Activated B cell treated with CpG ODN at 0.5 μM for 24 hours (primary cell): ENCODE measurements at regions of chr10 and their contacts with region 1.

Region 1: GRCh38 chr10:110567201-110568054 is at the start of gene SMC3:
- DNase-seq: peak; percentile 89
- ATAC-seq: peak; percentile 88
- H3K4me3 Mint-ChIP-seq: peak within 1 kb of the TSS; percentile 91
- H3K27ac Mint-ChIP-seq: peak within 1 kb of the TSS; percentile 98
- H3K4me1 Mint-ChIP-seq: peaks cover 41% of the 10 kb centered on the region
- H3K27me3 Mint-ChIP-seq: no peaks in the 10 kb centered on the region
- CTCF ChIP-seq: no peak
- total RNA-seq, gene SMC3: 41.1 and 43.3 TPM in 2 replicates

Region 2: DNA sequence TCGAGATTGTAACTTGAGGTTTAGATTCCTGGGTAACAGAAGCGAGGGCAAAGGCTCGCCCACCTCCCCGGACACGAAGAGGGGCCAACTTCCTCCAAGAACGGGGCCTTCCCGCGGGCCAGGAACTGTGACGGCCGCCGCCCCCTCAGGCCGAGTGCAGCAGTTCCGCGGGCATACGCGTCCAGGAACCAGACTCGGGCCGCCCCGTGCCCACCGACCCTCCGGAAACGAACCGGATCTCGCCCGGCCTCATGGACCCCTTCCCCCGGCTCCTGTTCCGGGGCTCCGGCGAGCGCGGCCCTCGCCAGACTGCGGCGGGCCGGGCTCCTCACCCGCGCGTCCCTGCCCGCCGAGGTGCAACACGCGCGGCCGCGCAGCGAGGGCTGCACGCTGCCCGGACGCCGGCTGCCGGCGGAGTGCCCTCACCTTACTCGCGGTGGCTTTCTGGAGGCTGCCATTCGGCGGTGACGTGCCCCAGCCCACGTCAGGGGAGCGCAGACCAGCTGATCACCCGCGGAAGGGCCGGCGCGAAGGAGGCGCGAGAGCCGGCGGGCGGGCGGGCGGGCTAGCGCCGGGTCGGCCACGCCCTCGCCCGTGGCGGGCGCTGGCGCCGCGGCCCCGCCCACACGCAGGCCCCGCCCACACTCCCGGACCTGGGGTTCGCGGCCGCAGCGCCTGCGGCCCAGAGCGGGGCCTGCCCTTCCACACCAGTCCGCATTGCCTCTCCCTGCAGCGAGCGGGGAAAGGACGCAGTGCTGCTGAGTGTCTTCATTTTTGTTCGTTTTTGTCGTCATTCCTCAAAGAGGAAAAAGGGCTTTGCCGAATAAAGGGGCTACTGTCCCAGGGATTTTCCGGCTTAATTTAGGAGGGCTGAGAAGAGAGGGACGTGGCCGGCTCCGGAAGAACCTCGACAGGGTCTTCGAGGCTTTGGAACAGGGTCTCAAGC is 644.2 kb before region 1 on chr10 and contains the start of gene XPNPEP1:
- CTCF ChIA-PET with region 1: no interaction called
- POLR2A ChIA-PET with region 1: no interaction called
- intact Hi-C with region 1: loop called (anchors 5 kb)
- DNase-seq: peak; percentile 85
- ATAC-seq: peak; percentile 94
- H3K4me3 Mint-ChIP-seq: peak within 1 kb of the TSS; percentile 88
- H3K27ac Mint-ChIP-seq: peak within 1 kb of the TSS; percentile 81
- H3K4me1 Mint-ChIP-seq: peaks cover 36% of the 10 kb centered on the region
- H3K27me3 Mint-ChIP-seq: peaks cover 2% of the 10 kb centered on the region
- CTCF ChIP-seq: no peak
- total RNA-seq, gene XPNPEP1: 53.5 and 70.6 TPM in 2 replicates

Region 3: DNA sequence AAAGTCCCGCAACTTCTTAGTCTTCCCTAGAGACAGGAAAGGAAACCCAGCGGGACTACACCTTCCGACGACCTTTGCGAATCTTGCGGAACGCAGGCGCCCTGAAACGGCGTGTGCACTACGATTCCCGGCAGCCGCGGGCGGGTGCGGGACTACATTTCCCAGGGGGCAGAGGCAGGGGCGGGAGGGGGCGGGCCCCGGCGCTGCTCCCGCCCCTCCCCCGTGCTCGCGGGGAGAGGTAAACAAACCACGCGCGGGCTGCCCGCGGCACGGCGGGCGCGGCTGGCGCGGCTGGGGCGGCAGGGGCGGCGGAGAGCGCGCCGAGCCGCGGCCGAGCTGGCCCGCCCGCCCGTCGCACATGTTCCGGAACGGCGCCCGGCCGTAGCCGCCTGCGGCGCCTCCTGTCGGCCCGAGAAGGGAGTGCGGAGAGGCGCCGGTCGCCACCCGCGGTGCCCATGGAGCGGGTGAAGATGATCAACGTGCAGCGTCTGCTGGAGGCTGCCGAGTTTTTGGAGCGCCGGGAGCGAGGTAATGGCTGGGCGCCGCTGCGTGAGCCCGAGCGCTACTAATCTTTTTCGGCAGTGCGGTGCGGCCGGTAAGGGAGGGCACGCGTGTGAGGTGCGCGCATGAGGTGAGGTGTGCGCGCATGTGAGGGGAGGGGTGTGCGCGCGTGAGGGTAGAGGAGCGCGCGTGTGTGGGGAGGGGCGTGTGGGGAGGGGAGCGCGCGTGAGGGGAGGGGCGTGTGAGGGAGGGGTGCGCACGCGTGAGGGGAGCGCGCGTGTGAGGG is 341.5 kb before region 1 on chr10:
- CTCF ChIA-PET with region 1: no interaction called
- POLR2A ChIA-PET with region 1: no interaction called
- intact Hi-C with region 1: loop called (anchors 1 kb)
- DNase-seq: peak; percentile 83
- ATAC-seq: peak; percentile 51
- H3K4me3 Mint-ChIP-seq: peak overlapping the region; percentile 97
- H3K27ac Mint-ChIP-seq: peak overlapping the region; percentile 96
- H3K4me1 Mint-ChIP-seq: peaks cover 28% of the 10 kb centered on the region
- H3K27me3 Mint-ChIP-seq: no peaks in the 10 kb centered on the region
- CTCF ChIP-seq: no peak

Region 4: GRCh38 chr10:110273474-110273873 is 294.0 kb before region 1 on chr10:
- CTCF ChIA-PET with region 1: no interaction called
- POLR2A ChIA-PET with region 1: no interaction called
- intact Hi-C with region 1: no loop called
- DNase-seq: no peak
- ATAC-seq: peak; percentile 69
- H3K4me3 Mint-ChIP-seq: no peak overlapping the region
- H3K27ac Mint-ChIP-seq: peak overlapping the region; percentile 42
- H3K4me1 Mint-ChIP-seq: peaks cover 38% of the 10 kb centered on the region
- H3K27me3 Mint-ChIP-seq: no peaks in the 10 kb centered on the region
- CTCF ChIP-seq: no peak

Region 5: DNA sequence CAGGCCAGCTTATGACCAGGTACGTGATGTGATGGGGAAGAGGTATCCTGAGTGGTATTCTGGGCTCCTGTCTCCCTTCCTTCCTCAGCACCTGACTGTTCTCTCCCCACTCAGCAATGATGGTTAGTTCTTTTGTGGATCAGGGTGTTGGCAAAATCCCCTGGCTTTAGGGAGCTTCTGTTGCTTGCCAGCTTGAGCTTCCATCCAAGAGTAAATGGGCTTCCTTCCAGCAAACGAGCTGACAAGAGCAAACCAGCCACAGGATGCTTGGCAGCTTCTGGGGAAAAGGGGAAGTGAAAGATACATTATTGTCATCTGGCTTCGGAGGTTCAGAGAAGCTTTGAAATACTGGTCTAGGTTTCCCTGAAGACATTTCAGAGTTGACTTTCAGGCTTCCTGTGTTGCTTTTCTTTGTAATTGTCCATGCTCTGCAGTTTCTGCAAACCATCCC is 64.6 kb before region 1 on chr10:
- CTCF ChIA-PET with region 1: no interaction called
- POLR2A ChIA-PET with region 1: interaction called, 3 read pairs
- intact Hi-C with region 1: loop called (anchors 2 kb)
- DNase-seq: no peak
- ATAC-seq: peak; percentile 53
- H3K4me3 Mint-ChIP-seq: peak overlapping the region; percentile 72
- H3K27ac Mint-ChIP-seq: peak overlapping the region; percentile 90
- H3K4me1 Mint-ChIP-seq: peaks cover 76% of the 10 kb centered on the region
- H3K27me3 Mint-ChIP-seq: no peaks in the 10 kb centered on the region
- CTCF ChIP-seq: no peak

Region 6: DNA sequence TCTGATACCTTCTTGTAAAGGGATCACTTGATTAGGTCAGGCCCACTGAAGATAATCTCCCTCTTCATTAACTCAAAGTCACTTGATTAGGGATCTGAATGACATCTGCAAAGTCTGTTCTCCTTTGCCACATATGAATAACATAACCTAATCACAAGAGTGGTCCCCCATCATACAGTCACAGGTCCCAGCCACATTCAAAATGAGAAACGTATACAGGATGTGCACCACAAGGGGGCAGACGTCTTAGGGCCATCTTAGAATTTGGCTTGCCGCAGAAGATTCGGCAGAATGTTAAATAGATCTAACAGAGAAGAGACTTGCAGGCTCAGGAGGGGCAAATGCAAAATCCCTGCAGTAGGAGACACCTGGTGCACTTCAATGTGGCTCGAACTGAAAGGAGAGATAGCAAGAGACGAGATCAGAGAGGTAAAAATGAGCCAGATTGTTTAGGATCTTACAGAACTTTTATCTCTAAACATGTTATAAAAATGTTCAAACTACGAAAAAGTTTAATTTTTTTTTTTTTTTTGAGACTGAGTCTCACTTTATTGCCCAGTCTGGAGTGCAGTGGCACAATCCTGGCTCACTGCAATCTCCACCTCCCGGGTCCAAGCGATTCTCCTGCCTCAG is 10.3 kb before region 1 on chr10:
- CTCF ChIA-PET with region 1: interaction called, 4 read pairs
- POLR2A ChIA-PET with region 1: interaction called, 5 read pairs
- intact Hi-C with region 1: loop called (anchors 1 kb)
- DNase-seq: no peak
- ATAC-seq: peak; percentile 79
- H3K4me3 Mint-ChIP-seq: no peak overlapping the region
- H3K27ac Mint-ChIP-seq: no peak overlapping the region
- H3K4me1 Mint-ChIP-seq: peaks cover 2% of the 10 kb centered on the region
- H3K27me3 Mint-ChIP-seq: peaks cover 15% of the 10 kb centered on the region
- CTCF ChIP-seq: no peak

Region 7: GRCh38 chr10:110871298-110872084 is 304.1 kb after region 1 on chr10 and contains the start of gene PDCD4:
- CTCF ChIA-PET with region 1: no interaction called
- POLR2A ChIA-PET with region 1: interaction called, 3 read pairs
- intact Hi-C with region 1: loop called (anchors 5 kb)
- DNase-seq: peak; percentile 87
- ATAC-seq: peak; percentile 71
- H3K4me3 Mint-ChIP-seq: peak within 1 kb of the TSS; percentile 94
- H3K27ac Mint-ChIP-seq: peak within 1 kb of the TSS; percentile 97
- H3K4me1 Mint-ChIP-seq: peaks cover 76% of the 10 kb centered on the region
- H3K27me3 Mint-ChIP-seq: no peaks in the 10 kb centered on the region
- CTCF ChIP-seq: no peak
- total RNA-seq, gene PDCD4: 143 and 145 TPM in 2 replicates

Region 8: GRCh38 chr10:112446855-112447711 is 1879.7 kb after region 1 on chr10 and contains the starts of genes VTI1A and ZDHHC6:
- CTCF ChIA-PET with region 1: no interaction called
- POLR2A ChIA-PET with region 1: no interaction called
- intact Hi-C with region 1: loop called (anchors 2 kb)
- DNase-seq: peak; percentile 81
- ATAC-seq: peak; percentile 88
- H3K4me3 Mint-ChIP-seq: peak within 1 kb of the TSS; percentile 89
- H3K27ac Mint-ChIP-seq: peak within 1 kb of the TSS; percentile 90
- H3K4me1 Mint-ChIP-seq: peaks cover 44% of the 10 kb centered on the region
- H3K27me3 Mint-ChIP-seq: no peaks in the 10 kb centered on the region
- CTCF ChIP-seq: no peak
- total RNA-seq, gene VTI1A: 56.9 and 74.0 TPM in 2 replicates
- total RNA-seq, gene ZDHHC6: 37.1 and 44.5 TPM in 2 replicates